ENCODE measurements at regions of chr15 and their contacts with region 1.

Region 1: DNA sequence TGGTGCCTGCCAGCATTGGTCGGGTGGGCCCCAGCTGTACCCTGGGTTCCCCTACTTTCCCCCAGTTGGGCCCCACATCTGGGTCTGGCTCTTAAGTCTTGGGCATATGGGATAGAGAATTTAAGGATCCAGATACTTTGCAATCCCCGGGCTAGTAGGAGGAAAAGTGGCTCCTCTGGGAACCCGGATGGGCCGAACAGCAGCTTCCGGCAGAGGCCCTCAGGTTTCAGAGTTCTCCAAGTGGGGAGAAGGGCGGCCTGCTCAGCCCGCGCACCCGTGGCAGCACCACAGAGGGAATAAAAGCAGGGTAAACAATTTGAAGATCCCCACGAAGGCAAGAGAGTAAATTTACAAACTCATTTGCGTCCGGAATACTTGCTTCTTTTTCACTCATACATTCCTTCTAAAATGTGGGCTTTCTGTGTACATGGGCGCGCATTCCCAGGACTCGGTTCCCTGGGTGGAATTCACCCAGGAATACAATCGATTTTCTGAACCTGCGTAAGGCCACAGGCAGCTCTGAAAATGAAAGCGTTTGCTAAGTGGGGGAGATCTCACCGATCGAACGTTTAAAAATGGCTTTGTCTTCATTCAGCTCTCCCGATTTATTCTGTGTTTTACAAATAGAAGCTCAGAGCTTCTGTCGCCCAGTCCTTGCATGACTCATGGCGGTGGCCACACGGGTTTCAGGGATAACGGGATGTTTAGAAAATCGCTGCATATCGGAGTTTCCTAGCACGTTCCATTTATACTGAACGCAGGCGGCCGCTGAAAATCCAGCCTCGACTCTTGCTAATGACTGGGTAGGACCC is 74.0 kb upstream of the POLG start:
- DNase-seq: no peak
- ATAC-seq: no peak
- H3K4me3 ChIP-seq: peak overlapping the region; percentile 51
- H3K4me3 Mint-ChIP-seq: peak overlapping the region; percentile 82 to 97 (median 89)
- H3K27ac ChIP-seq: no peak overlapping the region
- H3K27ac Mint-ChIP-seq: peak overlapping the region in 1 of 9 donors; percentile 84
- H3K4me1 ChIP-seq: peaks cover 9 to 26% of the 10 kb centered on the region in 2 donors
- H3K4me1 Mint-ChIP-seq: peaks cover 29 to 51% (median 47%) of the 10 kb centered on the region in 7 donors
- H3K27me3 ChIP-seq: peaks cover 38 to 55% of the 10 kb centered on the region in 2 donors
- H3K27me3 Mint-ChIP-seq: peaks cover 83 to 98% (median 91%) of the 10 kb centered on the region in 5 donors

Region 2: GRCh38 chr15:89177633-89178306 is 230.8 kb before region 1 on chr15:
- CTCF ChIA-PET with region 1: no interaction called
- POLR2A ChIA-PET with region 1: no interaction called
- intact Hi-C with region 1: no loop called
- DNase-seq: peak; percentile 15 to 66 (median 48)
- ATAC-seq: peak; percentile 63
- H3K4me3 ChIP-seq: no peak overlapping the region
- H3K4me3 Mint-ChIP-seq: no peak overlapping the region
- H3K27ac ChIP-seq: no peak overlapping the region
- H3K27ac Mint-ChIP-seq: peak overlapping the region in 2 of 9 donors; percentile 46 to 72
- H3K4me1 ChIP-seq: no peaks in the 10 kb centered on the region
- H3K4me1 Mint-ChIP-seq: peaks cover 5 to 17% (median 7%) of the 10 kb centered on the region in 7 donors
- H3K27me3 ChIP-seq: no peaks in the 10 kb centered on the region
- H3K27me3 Mint-ChIP-seq: no peaks in the 10 kb centered on the region

Region 3: GRCh38 chr15:89371228-89372079 is 37.1 kb before region 1 on chr15:
- CTCF ChIA-PET with region 1: no interaction called
- POLR2A ChIA-PET with region 1: no interaction called
- intact Hi-C with region 1: loop called in 1 of 2 experiments (anchors 2 kb)
- DNase-seq: no peak
- ATAC-seq: no peak
- H3K4me3 ChIP-seq: no peak overlapping the region
- H3K4me3 Mint-ChIP-seq: no peak overlapping the region
- H3K27ac ChIP-seq: no peak overlapping the region
- H3K27ac Mint-ChIP-seq: no peak overlapping the region
- H3K4me1 ChIP-seq: no peaks in the 10 kb centered on the region
- H3K4me1 Mint-ChIP-seq: peaks cover 3 to 24% (median 13%) of the 10 kb centered on the region in 7 donors
- H3K27me3 ChIP-seq: peaks cover 6% of the 10 kb centered on the region in 2 donors
- H3K27me3 Mint-ChIP-seq: peaks cover 67 to 89% (median 71%) of the 10 kb centered on the region in 5 donors